ENCODE measurements at regions of chr20 and their contacts with region 1.

Region 1: GRCh38 chr20:37804584-37805566 is 98.1 kb upstream of the VSTM2L start:
- DNase-seq: peak; percentile 86
- ATAC-seq: peak; percentile 90
- H3K4me3 ChIP-seq: peak overlapping the region; percentile 28; the same call in 1 of the 2 replicates
- H3K27ac ChIP-seq: peak overlapping the region; percentile 63
- H3K4me1 ChIP-seq: peaks cover 37% of the 10 kb centered on the region
- H3K27me3 ChIP-seq: no peaks in the 10 kb centered on the region
- CTCF ChIP-seq: no peak
- EP300 ChIP-seq: peak; percentile 57 to 69; a peak in 2 of 4 replicates
- POLR2A ChIP-seq: peak; percentile 59; the same call in 1 of the 2 replicates
- RAD21 ChIP-seq: no peak

Region 2: GRCh38 chr20:37781629-37782028 is 23.2 kb before region 1 on chr20:
- CTCF ChIA-PET with region 1: interaction called, 4 read pairs
- POLR2A ChIA-PET with region 1: no interaction called
- RAD21 ChIA-PET with region 1: interaction called, 4 read pairs
- SMC1A ChIA-PET with region 1: interaction called, 4 read pairs
- in situ Hi-C with region 1: no loop called
- intact Hi-C with region 1: loop called (anchors 2 kb)
- DNase-seq: no peak
- ATAC-seq: no peak
- H3K4me3 ChIP-seq: no peak overlapping the region
- H3K27ac ChIP-seq: no peak overlapping the region
- H3K4me1 ChIP-seq: no peaks in the 10 kb centered on the region
- H3K27me3 ChIP-seq: no peaks in the 10 kb centered on the region
- CTCF ChIP-seq: no peak
- EP300 ChIP-seq: no peak
- POLR2A ChIP-seq: no peak
- RAD21 ChIP-seq: no peak